ENCODE measurements at regions of chr1 and their contacts with region 1.

Region 1: DNA sequence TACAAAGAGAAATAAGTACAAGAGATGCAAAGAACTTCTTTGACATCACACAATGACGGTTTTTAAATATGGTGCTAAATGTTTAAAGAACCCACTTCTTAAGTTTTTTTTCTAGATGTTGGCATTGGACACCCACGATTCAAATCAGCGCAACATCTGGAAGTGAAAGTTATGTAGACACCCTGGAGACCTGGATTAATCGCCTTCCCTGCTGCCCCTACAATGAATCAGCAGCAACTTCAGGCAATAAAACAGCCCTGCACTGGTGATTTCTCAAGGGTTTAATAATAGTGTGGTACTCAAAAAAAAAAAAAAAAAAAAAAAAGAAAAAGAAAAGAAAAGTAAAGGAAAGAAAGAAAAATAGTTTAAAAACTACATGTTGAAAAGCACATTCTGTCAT is 248.3 kb downstream of the NUF2 start:
- DNase-seq: no peak
- H3K4me3 ChIP-seq: no peak overlapping the region
- H3K27ac ChIP-seq: no peak overlapping the region
- H3K4me1 ChIP-seq: no peaks in the 10 kb centered on the region
- H3K27me3 ChIP-seq: no peaks in the 10 kb centered on the region
- CTCF ChIP-seq: no peak
- POLR2A ChIP-seq: no peak

Region 2: GRCh38 chr1:163664671-163665335 is 94.7 kb after region 1 on chr1:
- CTCF ChIA-PET with region 1: no interaction called
- POLR2A ChIA-PET with region 1: no interaction called
- dilution Hi-C with region 1: no loop called
- intact Hi-C with region 1: loop called (anchors 10 kb)
- DNase-seq: no peak
- H3K4me3 ChIP-seq: no peak overlapping the region
- H3K27ac ChIP-seq: no peak overlapping the region
- H3K4me1 ChIP-seq: no peaks in the 10 kb centered on the region
- H3K27me3 ChIP-seq: no peaks in the 10 kb centered on the region
- CTCF ChIP-seq: no peak
- POLR2A ChIP-seq: no peak